Activated B cell treated with CpG ODN at 0.5 μM for 24 hours (primary cell): ENCODE measurements at regions of chr3 and their contacts with region 1.

Region 1: DNA sequence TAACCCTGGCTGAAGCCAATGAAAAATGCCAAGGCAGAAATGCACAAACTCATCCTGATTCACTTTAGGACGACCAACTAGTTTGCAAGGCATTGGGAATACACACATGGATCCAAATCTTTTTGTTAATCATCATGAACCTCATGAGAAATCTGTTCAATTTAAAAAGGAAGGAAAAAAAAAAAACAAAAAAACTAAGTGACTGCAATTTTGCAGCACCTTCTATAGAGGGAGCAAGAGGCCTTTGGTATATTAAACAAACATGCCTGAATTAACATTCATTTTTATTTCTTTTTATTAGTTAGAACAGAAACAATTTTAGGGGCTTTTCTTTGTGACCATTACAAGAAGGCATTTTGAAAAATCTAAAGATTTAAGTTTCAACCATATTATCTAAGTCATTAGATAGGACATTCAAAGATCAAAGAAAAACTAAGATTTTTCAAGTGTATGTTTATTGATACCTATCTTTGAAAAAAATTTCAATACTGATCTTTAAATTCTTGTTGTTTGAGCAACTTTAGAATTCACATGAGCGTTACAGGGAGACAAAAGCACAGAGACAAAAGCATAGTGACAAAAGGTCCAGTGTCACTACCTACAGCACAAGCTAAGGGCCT is 182.4 kb downstream of the CBLB start:
- DNase-seq: no peak
- ATAC-seq: peak; percentile 40
- H3K4me3 Mint-ChIP-seq: no peak overlapping the region
- H3K27ac Mint-ChIP-seq: peak overlapping the region; percentile 41
- H3K4me1 Mint-ChIP-seq: peaks cover 8% of the 10 kb centered on the region
- H3K27me3 Mint-ChIP-seq: no peaks in the 10 kb centered on the region
- CTCF ChIP-seq: peak; percentile 65

Region 2: DNA sequence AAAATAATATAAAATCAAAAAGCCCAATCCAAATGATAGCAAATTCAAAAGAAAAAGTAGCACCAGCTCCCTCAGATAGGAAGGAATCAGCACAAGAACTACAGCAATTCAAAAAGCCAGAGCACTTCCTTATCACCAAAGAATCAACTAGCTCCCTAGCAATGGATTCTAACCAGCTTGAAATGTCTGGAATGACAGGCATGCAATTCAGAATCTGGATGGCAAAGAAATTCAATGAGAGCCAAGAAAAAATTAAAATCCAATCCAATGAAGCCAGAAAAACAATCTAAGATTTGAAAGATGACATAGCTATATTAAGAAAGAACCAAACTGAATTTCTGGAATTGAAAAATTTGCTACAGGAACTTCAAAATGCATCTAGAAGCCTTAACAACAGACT is 1654.1 kb before region 1 on chr3:
- CTCF ChIA-PET with region 1: no interaction called
- POLR2A ChIA-PET with region 1: no interaction called
- intact Hi-C with region 1: no loop called
- DNase-seq: no peak
- ATAC-seq: no peak
- H3K4me3 Mint-ChIP-seq: no peak overlapping the region
- H3K27ac Mint-ChIP-seq: no peak overlapping the region
- H3K4me1 Mint-ChIP-seq: no peaks in the 10 kb centered on the region
- H3K27me3 Mint-ChIP-seq: peaks cover 2% of the 10 kb centered on the region
- CTCF ChIP-seq: no peak

Region 3: GRCh38 chr3:105672996-105673395 is 13.4 kb before region 1 on chr3:
- CTCF ChIA-PET with region 1: no interaction called
- POLR2A ChIA-PET with region 1: no interaction called
- intact Hi-C with region 1: no loop called
- DNase-seq: no peak
- ATAC-seq: no peak
- H3K4me3 Mint-ChIP-seq: no peak overlapping the region
- H3K27ac Mint-ChIP-seq: no peak overlapping the region
- H3K4me1 Mint-ChIP-seq: no peaks in the 10 kb centered on the region
- H3K27me3 Mint-ChIP-seq: no peaks in the 10 kb centered on the region
- CTCF ChIP-seq: no peak

Region 4: DNA sequence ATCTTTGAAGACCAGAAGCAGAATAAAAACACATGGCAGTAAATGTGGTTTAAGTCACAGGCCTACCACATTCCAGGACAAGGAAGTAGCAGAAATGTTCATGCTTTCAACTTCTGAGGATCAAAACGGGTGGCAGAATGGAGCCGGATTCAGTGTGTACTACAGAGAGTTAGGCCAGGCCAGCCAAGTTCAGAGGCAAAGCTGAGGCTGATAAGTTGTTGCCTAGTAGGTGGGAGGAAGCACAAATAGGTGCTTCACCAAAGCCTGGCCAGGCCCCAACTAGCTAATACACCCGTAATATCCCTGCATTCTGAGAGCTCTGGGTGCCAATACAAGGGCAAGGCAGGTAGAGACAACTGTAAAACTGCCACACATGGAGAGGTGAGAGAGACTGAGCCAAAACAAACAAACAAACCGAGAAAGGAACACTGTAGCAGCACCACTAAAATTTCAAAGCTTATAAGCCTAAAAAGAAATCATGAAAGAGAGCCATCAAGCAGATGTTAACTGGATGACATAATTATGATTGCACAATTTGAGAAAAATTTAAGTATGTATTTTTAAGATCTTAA is 338.8 kb after region 1 on chr3:
- CTCF ChIA-PET with region 1: no interaction called
- POLR2A ChIA-PET with region 1: no interaction called
- intact Hi-C with region 1: loop called (anchors 5 kb)
- DNase-seq: no peak
- ATAC-seq: no peak
- H3K4me3 Mint-ChIP-seq: no peak overlapping the region
- H3K27ac Mint-ChIP-seq: no peak overlapping the region
- H3K4me1 Mint-ChIP-seq: no peaks in the 10 kb centered on the region
- H3K27me3 Mint-ChIP-seq: no peaks in the 10 kb centered on the region
- CTCF ChIP-seq: no peak

Region 5: DNA sequence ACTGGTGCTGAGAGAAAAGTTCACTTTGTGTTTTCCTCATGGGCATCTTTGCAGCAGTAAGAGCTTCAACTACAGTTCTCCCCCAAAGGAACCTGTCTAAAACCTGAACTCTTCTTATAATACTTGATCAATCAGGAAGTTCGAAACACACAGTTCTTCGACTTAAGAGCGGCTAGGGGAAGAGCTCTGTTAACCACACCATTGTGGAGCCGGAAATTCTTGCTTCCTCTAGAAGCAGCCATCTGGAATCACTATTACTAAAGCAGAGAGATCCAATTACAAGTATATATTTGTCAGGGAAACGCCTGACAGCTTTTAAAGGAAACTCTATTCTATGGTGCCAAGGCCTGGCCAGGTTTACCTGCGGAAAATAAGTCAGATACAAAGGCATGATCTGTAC is 519.8 kb after region 1 on chr3:
- CTCF ChIA-PET with region 1: interaction called, 3 read pairs
- POLR2A ChIA-PET with region 1: no interaction called
- intact Hi-C with region 1: loop called (anchors 2 kb)
- DNase-seq: no peak
- ATAC-seq: peak; percentile 78
- H3K4me3 Mint-ChIP-seq: peak overlapping the region; percentile 25
- H3K27ac Mint-ChIP-seq: no peak overlapping the region
- H3K4me1 Mint-ChIP-seq: peaks cover 33% of the 10 kb centered on the region
- H3K27me3 Mint-ChIP-seq: no peaks in the 10 kb centered on the region
- CTCF ChIP-seq: no peak

Region 6: GRCh38 chr3:106609666-106610301 is 923.4 kb after region 1 on chr3:
- CTCF ChIA-PET with region 1: interaction called, 39 read pairs
- POLR2A ChIA-PET with region 1: no interaction called
- intact Hi-C with region 1: loop called (anchors 1 kb)
- DNase-seq: no peak
- ATAC-seq: peak; percentile 64
- H3K4me3 Mint-ChIP-seq: no peak overlapping the region
- H3K27ac Mint-ChIP-seq: no peak overlapping the region
- H3K4me1 Mint-ChIP-seq: no peaks in the 10 kb centered on the region
- H3K27me3 Mint-ChIP-seq: no peaks in the 10 kb centered on the region
- CTCF ChIP-seq: peak; percentile 87